ENCODE measurements at regions of chr20 and their contacts with region 1.

Region 1: DNA sequence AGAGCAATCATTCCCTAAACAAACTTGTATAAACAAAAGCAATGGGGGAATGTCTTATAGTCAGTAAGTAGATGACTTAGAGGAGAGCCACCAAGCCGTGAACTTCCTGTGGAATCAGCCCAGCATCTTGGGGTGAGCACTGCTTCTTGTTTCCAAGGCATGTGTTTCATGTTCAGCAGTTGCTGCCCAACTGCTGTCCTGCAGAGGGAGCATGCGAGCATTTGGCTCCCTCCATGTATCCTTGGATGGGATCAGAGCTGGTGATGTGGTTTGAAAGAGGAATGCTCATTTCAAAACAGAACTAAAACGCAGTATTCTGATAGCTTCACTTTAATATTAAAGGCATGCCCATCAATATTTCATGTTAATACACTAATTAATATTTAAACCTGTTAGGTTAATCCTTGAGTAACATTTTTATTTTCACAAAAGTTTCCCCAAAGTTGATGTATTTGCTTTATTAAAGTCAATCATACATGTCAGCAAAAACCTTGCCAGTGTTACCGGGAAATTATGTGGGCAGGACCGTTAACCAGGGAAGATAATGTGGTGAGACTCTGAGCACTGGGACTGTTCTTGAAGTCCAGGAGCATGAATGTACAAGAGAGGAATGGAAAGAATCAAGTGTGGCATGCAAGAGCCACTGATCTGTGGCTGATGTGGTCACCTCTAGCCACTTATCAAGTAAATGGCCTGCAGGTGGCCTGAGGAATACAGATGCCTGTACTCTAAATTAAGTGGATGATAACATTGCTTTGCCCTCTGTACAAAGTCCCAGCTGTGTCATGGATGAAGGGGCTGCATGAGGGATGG is 172.2 kb upstream of the GGTLC1 start:
- DNase-seq: peak; percentile 43
- H3K4me3 ChIP-seq: no peak overlapping the region
- H3K27ac ChIP-seq: no peak overlapping the region
- H3K4me1 ChIP-seq: no peaks in the 10 kb centered on the region
- H3K27me3 ChIP-seq: no peaks in the 10 kb centered on the region
- CTCF ChIP-seq: peak; percentile 60 to 79

Region 2: GRCh38 chr20:23889775-23890211 is 271.0 kb before region 1 on chr20:
- CTCF ChIA-PET with region 1: no interaction called
- dilution Hi-C with region 1: no loop called
- in situ Hi-C with region 1: no loop called
- intact Hi-C with region 1: loop called (anchors 2 kb)
- DNase-seq: peak; percentile 71
- H3K4me3 ChIP-seq: no peak overlapping the region
- H3K27ac ChIP-seq: no peak overlapping the region
- H3K4me1 ChIP-seq: no peaks in the 10 kb centered on the region
- H3K27me3 ChIP-seq: peaks cover 2% of the 10 kb centered on the region
- CTCF ChIP-seq: peak; percentile 44 to 79

Region 3: DNA sequence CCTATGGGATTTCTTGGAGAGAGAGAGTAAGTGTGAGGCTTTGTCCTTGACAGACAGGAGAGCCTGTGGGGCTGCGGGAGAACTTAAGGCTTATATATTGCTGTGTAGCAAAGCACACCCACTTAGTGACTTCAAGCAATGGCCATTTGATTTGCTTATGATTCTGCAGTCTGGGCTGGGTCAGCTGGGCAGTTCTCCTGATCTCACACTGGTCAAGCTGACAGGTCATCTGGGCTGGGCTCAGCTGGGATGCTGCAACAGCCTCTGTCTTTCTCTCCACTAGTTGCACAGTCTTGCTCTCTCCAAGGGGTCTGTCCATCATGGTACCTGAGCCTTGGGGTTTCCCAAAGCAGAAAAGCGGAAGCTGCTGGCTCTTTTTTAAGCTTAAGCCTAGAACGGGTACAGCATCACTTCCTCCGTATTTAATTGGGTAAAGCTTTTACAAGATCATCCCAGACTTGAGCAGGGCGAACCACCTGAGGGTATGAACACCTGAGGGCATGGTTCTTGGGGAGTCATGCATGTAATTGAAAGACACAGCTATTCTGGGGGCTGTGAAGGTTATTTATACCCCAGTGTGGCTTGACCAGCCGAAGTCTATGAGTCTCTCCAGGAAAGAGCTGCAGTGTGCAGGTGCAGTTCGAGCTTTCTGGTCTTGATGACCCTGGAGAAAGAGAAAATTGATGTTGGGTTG is 158.9 kb before region 1 on chr20:
- CTCF ChIA-PET with region 1: no interaction called
- dilution Hi-C with region 1: no loop called
- in situ Hi-C with region 1: no loop called
- intact Hi-C with region 1: loop called (anchors 5 kb)
- DNase-seq: no peak
- H3K4me3 ChIP-seq: no peak overlapping the region
- H3K27ac ChIP-seq: no peak overlapping the region
- H3K4me1 ChIP-seq: no peaks in the 10 kb centered on the region
- H3K27me3 ChIP-seq: no peaks in the 10 kb centered on the region
- CTCF ChIP-seq: no peak

Region 4: GRCh38 chr20:24100385-24101011 is 60.3 kb before region 1 on chr20:
- CTCF ChIA-PET with region 1: interaction called, 5 read pairs
- dilution Hi-C with region 1: no loop called
- in situ Hi-C with region 1: no loop called
- intact Hi-C with region 1: loop called (anchors 5 kb)
- DNase-seq: peak; percentile 66
- H3K4me3 ChIP-seq: no peak overlapping the region
- H3K27ac ChIP-seq: no peak overlapping the region
- H3K4me1 ChIP-seq: peaks cover 13% of the 10 kb centered on the region
- H3K27me3 ChIP-seq: no peaks in the 10 kb centered on the region
- CTCF ChIP-seq: peak; percentile 51 to 61

Region 5: GRCh38 chr20:24917797-24918578 is 757.2 kb after region 1 on chr20:
- CTCF ChIA-PET with region 1: no interaction called
- dilution Hi-C with region 1: no loop called
- in situ Hi-C with region 1: no loop called
- intact Hi-C with region 1: loop called (anchors 2 kb)
- DNase-seq: peak; percentile 33
- H3K4me3 ChIP-seq: no peak overlapping the region
- H3K27ac ChIP-seq: no peak overlapping the region
- H3K4me1 ChIP-seq: no peaks in the 10 kb centered on the region
- H3K27me3 ChIP-seq: no peaks in the 10 kb centered on the region
- CTCF ChIP-seq: peak; percentile 75 to 88

Measured in mammary epithelial cell (primary cell).